MCF 10A (cell line): ENCODE measurements at regions of chr5 and their contacts with region 1.

Region 1: DNA sequence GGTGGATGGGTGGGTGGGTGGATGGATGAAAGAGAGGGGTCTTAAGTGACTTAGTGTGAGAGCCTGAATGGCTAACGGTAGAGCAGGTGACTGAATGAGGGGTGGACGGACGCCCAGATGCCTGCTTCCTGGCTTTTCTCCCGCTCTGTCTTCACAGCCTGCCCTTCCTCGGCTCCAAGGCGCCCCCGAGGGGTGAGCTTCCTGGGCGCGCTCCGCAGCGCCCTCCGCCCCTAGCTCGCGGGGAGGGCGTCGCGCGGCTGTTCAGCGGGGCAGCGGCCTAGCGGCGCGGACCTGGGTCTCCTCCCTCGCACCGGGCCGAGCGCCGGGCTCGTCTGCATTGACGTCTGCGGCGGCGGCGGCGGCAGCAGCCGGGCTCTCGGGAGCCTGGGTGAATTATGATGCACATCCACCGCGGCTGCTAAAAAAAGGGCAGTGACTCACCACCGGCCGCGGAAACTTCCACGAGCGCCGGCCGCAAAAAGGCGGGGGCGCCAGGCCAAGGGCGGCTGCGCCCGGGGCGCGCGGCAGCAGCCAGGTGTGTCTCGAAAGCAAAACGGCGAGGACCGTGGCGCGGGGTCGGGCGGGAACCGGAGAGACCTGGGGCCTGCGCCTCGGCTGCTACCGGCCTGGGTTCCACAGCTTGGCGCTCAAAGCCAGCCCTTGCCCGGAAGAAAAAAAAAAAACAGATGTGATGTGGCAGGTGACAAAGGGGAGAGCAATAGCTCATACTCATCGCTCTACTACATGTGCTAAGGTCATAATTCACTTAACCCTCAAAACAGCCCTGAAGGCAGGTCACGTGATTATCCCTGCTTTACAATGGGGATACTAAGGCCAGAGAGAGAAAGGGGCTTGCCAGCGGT is 143.0 kb upstream of the ADRA1B start:
- DNase-seq: peak; percentile 93
- H3K4me3 Mint-ChIP-seq: peak overlapping the region; percentile 58
- H3K27ac Mint-ChIP-seq: no peak overlapping the region
- H3K4me1 Mint-ChIP-seq: peaks cover 8% of the 10 kb centered on the region
- H3K27me3 Mint-ChIP-seq: no peaks in the 10 kb centered on the region
- CTCF ChIP-seq: no peak

Region 2: DNA sequence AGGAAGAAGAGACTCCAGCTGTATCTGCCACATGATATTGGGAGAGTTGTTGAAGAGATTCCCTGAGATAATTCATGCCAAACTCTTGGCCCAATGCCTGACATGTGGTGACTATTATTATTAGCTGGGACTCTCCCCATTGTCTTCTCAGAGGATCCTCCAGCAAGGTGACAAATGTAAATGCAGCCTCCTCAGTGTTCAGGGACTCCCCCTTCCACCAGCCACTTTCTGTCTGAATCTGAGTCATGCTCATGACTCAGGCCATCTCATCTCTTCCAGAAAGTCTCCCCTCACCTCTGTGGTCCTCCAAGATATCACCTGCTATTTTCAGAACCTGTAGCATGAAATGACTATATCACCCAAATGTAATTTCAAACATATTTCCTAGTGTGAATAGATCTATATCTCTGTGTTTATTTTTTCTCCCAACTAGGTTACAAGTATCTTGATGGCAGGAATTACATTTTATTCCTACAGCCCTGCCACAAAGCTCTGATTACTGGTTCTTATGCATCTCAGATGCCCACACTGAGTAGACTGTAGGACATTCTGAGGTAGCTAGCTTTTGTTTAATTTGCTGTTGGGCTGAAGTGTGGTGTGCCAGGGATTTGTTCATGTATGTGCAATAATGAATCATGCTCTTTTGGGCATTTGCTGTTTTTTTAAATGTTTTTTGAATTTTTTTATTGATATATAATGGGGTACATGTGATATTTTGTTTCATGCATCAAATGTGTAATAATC is 316.4 kb before region 1 on chr5:
- CTCF ChIA-PET with region 1: no interaction called
- POLR2A ChIA-PET with region 1: no interaction called
- intact Hi-C with region 1: loop called (anchors 10 kb)
- DNase-seq: peak; percentile 79
- H3K4me3 Mint-ChIP-seq: no peak overlapping the region
- H3K27ac Mint-ChIP-seq: no peak overlapping the region
- H3K4me1 Mint-ChIP-seq: peaks cover 11% of the 10 kb centered on the region
- H3K27me3 Mint-ChIP-seq: no peaks in the 10 kb centered on the region
- CTCF ChIP-seq: no peak

Region 3: GRCh38 chr5:159826351-159827214 is 53.3 kb after region 1 on chr5:
- CTCF ChIA-PET with region 1: no interaction called
- POLR2A ChIA-PET with region 1: no interaction called
- intact Hi-C with region 1: loop called (anchors 5 kb)
- DNase-seq: peak; percentile 98
- H3K4me3 Mint-ChIP-seq: peak overlapping the region; percentile 5
- H3K27ac Mint-ChIP-seq: peak overlapping the region; percentile 70
- H3K4me1 Mint-ChIP-seq: peaks cover 35% of the 10 kb centered on the region
- H3K27me3 Mint-ChIP-seq: no peaks in the 10 kb centered on the region
- CTCF ChIP-seq: no peak

Region 4: DNA sequence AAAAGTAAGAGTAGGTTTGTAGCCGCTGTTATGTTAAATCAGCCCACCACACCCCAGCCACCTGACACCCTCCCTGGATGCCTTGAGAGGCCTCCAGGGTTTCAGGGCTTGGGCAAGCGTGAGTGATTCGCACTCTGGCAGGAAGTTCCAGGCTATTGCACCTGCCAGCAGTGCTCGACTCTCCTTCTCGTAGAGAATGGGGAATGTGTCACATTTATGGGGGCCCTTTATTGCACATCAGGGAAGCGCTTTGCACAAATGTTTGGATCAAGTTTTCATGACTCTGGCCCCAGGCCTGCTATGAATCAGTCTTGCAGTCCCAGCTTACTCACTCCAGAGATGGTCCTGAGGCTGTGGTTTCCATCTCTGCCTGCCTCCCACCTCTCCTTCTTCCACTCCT is 76.9 kb after region 1 on chr5:
- CTCF ChIA-PET with region 1: no interaction called
- POLR2A ChIA-PET with region 1: no interaction called
- intact Hi-C with region 1: loop called (anchors 5 kb)
- DNase-seq: peak; percentile 94
- H3K4me3 Mint-ChIP-seq: no peak overlapping the region
- H3K27ac Mint-ChIP-seq: peak overlapping the region; percentile 65
- H3K4me1 Mint-ChIP-seq: peaks cover 18% of the 10 kb centered on the region
- H3K27me3 Mint-ChIP-seq: no peaks in the 10 kb centered on the region
- CTCF ChIP-seq: no peak

Region 5: GRCh38 chr5:159915904-159916840 is 142.9 kb after region 1 on chr5 and contains the start of gene ADRA1B:
- CTCF ChIA-PET with region 1: interaction called, 3 read pairs
- POLR2A ChIA-PET with region 1: interaction called, 3 read pairs
- intact Hi-C with region 1: loop called (anchors 2 kb)
- DNase-seq: peak; percentile 55
- H3K4me3 Mint-ChIP-seq: peak within 1 kb of the TSS; percentile 44
- H3K27ac Mint-ChIP-seq: peak within 1 kb of the TSS; percentile 28
- H3K4me1 Mint-ChIP-seq: peaks cover 44% of the 10 kb centered on the region
- H3K27me3 Mint-ChIP-seq: no peaks in the 10 kb centered on the region
- CTCF ChIP-seq: peak; percentile 63
- total RNA-seq, gene ADRA1B: 0.14 TPM in 1 of 2 replicates, not detected in the other